ENCODE measurements at regions of chr12 and their contacts with region 1.

Region 1: GRCh38 chr12:56645717-56646446 is at the start of gene ATP5F1B:
- DNase-seq: peak; percentile 96
- H3K4me3 Mint-ChIP-seq: peak within 1 kb of the TSS; percentile 96
- H3K27ac Mint-ChIP-seq: peak within 1 kb of the TSS; percentile 98
- H3K4me1 Mint-ChIP-seq: peaks cover 32% of the 10 kb centered on the region
- H3K27me3 Mint-ChIP-seq: no peaks in the 10 kb centered on the region
- total RNA-seq, gene ATP5F1B: 709 to 722 TPM

Region 2: GRCh38 chr12:56630160-56630632 is 15.7 kb before region 1 on chr12 and contains the start of gene BAZ2A:
- CTCF ChIA-PET with region 1: interaction called, 39 read pairs
- POLR2A ChIA-PET with region 1: interaction called, 36 read pairs
- intact Hi-C with region 1: no loop called
- DNase-seq: peak; percentile 92
- H3K4me3 Mint-ChIP-seq: peak within 1 kb of the TSS; percentile 93
- H3K27ac Mint-ChIP-seq: peak within 1 kb of the TSS; percentile 93
- H3K4me1 Mint-ChIP-seq: peaks cover 71% of the 10 kb centered on the region
- H3K27me3 Mint-ChIP-seq: no peaks in the 10 kb centered on the region
- total RNA-seq, gene BAZ2A: 90.7 to 111 TPM

Region 3: GRCh38 chr12:56661560-56661959 is 15.7 kb after region 1 on chr12:
- CTCF ChIA-PET with region 1: interaction called, 5 read pairs
- POLR2A ChIA-PET with region 1: interaction called, 6 read pairs
- intact Hi-C with region 1: loop called (anchors 2 kb)
- DNase-seq: peak; percentile 23
- H3K4me3 Mint-ChIP-seq: no peak overlapping the region
- H3K27ac Mint-ChIP-seq: no peak overlapping the region
- H3K4me1 Mint-ChIP-seq: peaks cover 26% of the 10 kb centered on the region
- H3K27me3 Mint-ChIP-seq: no peaks in the 10 kb centered on the region

Region 4: GRCh38 chr12:56724972-56725722 is 79.3 kb after region 1 on chr12 and contains the start of gene NACA:
- CTCF ChIA-PET with region 1: interaction called, 3 read pairs
- POLR2A ChIA-PET with region 1: interaction called, 5 read pairs
- intact Hi-C with region 1: loop called (anchors 1 kb)
- DNase-seq: peak; percentile 99
- H3K4me3 Mint-ChIP-seq: peak within 1 kb of the TSS; percentile 96
- H3K27ac Mint-ChIP-seq: peak within 1 kb of the TSS; percentile 94
- H3K4me1 Mint-ChIP-seq: peaks cover 44% of the 10 kb centered on the region
- H3K27me3 Mint-ChIP-seq: no peaks in the 10 kb centered on the region
- total RNA-seq, gene NACA: 1,098 to 1,103 TPM

Measured in activated CD4-positive, alpha-beta memory T cell treated with anti-CD3 and anti-CD28 coated beads for 36 hours (primary cell).